ENCODE measurements at regions of chr4 and their contacts with region 1.

Region 1: GRCh38 chr4:25654971-25655963 is at the start of gene SLC34A2:
- DNase-seq: peak; percentile 46 to 84
- H3K4me3 ChIP-seq: peak within 1 kb of the TSS; percentile 31 to 58 (median 38)
- H3K27ac ChIP-seq: no peak within 1 kb of the TSS
- H3K4me1 ChIP-seq: peaks cover 14 to 28% (median 18%) of the 10 kb centered on the region in 4 experiments
- H3K27me3 ChIP-seq: peaks cover 1 to 36% (median 34%) of the 10 kb centered on the region in 4 experiments
- CTCF ChIP-seq: peak in 1 of 3 experiments; percentile 3; a peak in 2 of 4 replicates
- EP300 ChIP-seq: peak in 1 of 2 experiments; percentile 9; a peak in 1 of 3 replicates
- POLR2A ChIP-seq: peak in 1 of 2 experiments; percentile 2; a peak in 1 of 3 replicates
- RAD21 ChIP-seq: peak in 1 of 2 experiments; percentile 25; a peak in 2 of 4 replicates
- total RNA-seq, gene SLC34A2: 2.9 and 3.4 TPM in 2 replicates

Region 2: DNA sequence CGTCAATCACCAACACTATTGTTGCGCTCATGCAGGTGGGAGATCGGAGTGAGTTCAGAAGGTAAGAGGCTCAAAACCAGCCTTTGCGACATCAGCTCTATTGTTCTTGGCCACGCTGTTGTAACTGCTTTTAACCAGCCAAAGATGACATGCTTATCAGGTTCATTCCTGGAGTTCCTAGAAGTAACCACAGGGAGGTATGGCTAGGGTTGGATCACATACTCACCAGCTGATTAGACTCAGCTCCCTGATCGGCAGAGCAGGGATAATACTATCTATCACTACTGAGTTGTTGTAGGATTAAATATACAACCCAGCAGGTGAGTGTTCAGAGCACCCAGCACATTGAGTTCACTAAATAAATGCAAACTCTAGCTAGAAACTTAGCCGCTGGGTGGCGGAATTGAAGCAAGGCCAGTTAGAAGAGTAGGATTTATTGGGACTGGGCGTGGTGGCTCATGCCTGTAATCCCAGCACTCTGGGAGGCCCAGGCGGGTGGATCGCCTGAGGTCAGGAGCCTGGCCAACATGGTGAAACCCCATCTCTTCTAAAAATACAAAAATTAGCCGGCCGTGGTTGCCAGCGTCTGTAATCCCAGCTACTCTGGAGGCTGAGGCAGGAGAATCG is 12.8 kb after region 1 on chr4:
- CTCF ChIA-PET with region 1: interaction called, 11 read pairs
- POLR2A ChIA-PET with region 1: interaction called, 14 read pairs
- DNase-seq: no peak
- H3K4me3 ChIP-seq: no peak overlapping the region
- H3K27ac ChIP-seq: no peak overlapping the region
- H3K4me1 ChIP-seq: peaks cover 0 to 7% (median 3%) of the 10 kb centered on the region in 4 experiments; a peak in 5 of 7 replicates
- H3K27me3 ChIP-seq: no peaks in the 10 kb centered on the region
- CTCF ChIP-seq: peak in 1 of 3 experiments; percentile 4; a peak in 1 of 4 replicates
- EP300 ChIP-seq: no peak
- POLR2A ChIP-seq: no peak
- RAD21 ChIP-seq: peak in 1 of 2 experiments; percentile 35; a peak in 2 of 4 replicates

Measured in H1 (cell line).